HepG2 (cell line): ENCODE measurements at regions of chr5 and their contacts with region 1.

Region 1: GRCh38 chr5:160315968-160316367 is 3.6 kb upstream of the CCNJL start:
- DNase-seq: peak; percentile 85
- ATAC-seq: peak; percentile 74
- H3K4me3 ChIP-seq: no peak overlapping the region
- H3K27ac ChIP-seq: no peak overlapping the region
- H3K4me1 ChIP-seq: peaks cover 41% of the 10 kb centered on the region
- H3K27me3 ChIP-seq: peaks cover 0 to 3% of the 10 kb centered on the region in 2 experiments; a peak in 1 of 5 replicates
- CTCF ChIP-seq: no peak
- EP300 ChIP-seq: peak; percentile 48 to 73; a peak in 3 of 4 replicates
- POLR2A ChIP-seq: no peak
- RAD21 ChIP-seq: no peak

Region 2: GRCh38 chr5:160165137-160166068 is 150.6 kb before region 1 on chr5:
- CTCF ChIA-PET with region 1: no interaction called
- POLR2A ChIA-PET with region 1: no interaction called
- in situ Hi-C with region 1: no loop called
- intact Hi-C with region 1: no loop called
- DNase-seq: peak; percentile 82
- ATAC-seq: peak; percentile 91
- H3K4me3 ChIP-seq: peak overlapping the region in 2 of 3 experiments; percentile 34 to 56; a peak in 4 of 6 replicates
- H3K27ac ChIP-seq: no peak overlapping the region
- H3K4me1 ChIP-seq: peaks cover 41% of the 10 kb centered on the region
- H3K27me3 ChIP-seq: 0 out of 5 replicates have a peak, but pooled peaks cover 0 to 4% of the 10 kb centered on the region in 2 experiments
- CTCF ChIP-seq: no peak
- EP300 ChIP-seq: peak in 1 of 2 experiments; percentile 29; a peak in 1 of 4 replicates
- POLR2A ChIP-seq: 0 out of 4 replicates have a peak, but pooled peaks of 1 of the 2 experiments have one; percentile 25
- RAD21 ChIP-seq: no peak

Region 3: GRCh38 chr5:160260881-160261815 is 54.8 kb before region 1 on chr5:
- CTCF ChIA-PET with region 1: no interaction called
- POLR2A ChIA-PET with region 1: no interaction called
- in situ Hi-C with region 1: no loop called
- intact Hi-C with region 1: loop called (anchors 5 kb)
- DNase-seq: peak; percentile 50
- ATAC-seq: peak; percentile 76
- H3K4me3 ChIP-seq: peak overlapping the region in 2 of 3 experiments; percentile 2 to 45; a peak in 3 of 6 replicates
- H3K27ac ChIP-seq: no peak overlapping the region
- H3K4me1 ChIP-seq: peaks cover 37% of the 10 kb centered on the region
- H3K27me3 ChIP-seq: no peaks in the 10 kb centered on the region
- CTCF ChIP-seq: no peak
- EP300 ChIP-seq: no peak
- POLR2A ChIP-seq: no peak
- RAD21 ChIP-seq: no peak

Region 4: DNA sequence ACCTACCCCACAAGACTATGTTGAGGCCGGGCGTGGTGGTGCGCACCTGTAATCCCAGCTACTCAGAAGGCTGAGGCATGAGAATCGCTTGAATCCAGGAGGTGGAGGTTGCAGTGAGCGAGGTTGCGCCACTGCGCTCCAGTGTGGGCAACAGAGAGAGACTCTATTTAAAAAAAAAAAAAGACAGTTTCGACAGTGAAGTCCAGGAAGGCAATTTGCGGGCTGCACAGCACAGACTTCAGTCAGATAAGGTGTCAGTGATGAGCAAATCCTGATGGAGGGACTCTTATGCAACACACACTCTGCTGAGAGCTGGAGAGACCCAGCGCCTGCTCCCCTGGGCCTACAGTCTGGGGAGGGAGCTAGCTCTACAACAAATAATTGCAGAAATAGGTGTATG is 17.8 kb before region 1 on chr5:
- CTCF ChIA-PET with region 1: no interaction called
- POLR2A ChIA-PET with region 1: no interaction called
- in situ Hi-C with region 1: no loop called
- intact Hi-C with region 1: no loop called
- DNase-seq: no peak
- ATAC-seq: peak; percentile 51; the same call in 1 of the 3 replicates
- H3K4me3 ChIP-seq: no peak overlapping the region
- H3K27ac ChIP-seq: no peak overlapping the region
- H3K4me1 ChIP-seq: peaks cover 9% of the 10 kb centered on the region; the same call in 1 of the 2 replicates
- H3K27me3 ChIP-seq: no peaks in the 10 kb centered on the region
- CTCF ChIP-seq: no peak
- EP300 ChIP-seq: no peak
- POLR2A ChIP-seq: no peak
- RAD21 ChIP-seq: no peak